Naive thymus-derived CD4-positive, alpha-beta T cell (primary cell): ENCODE measurements at regions of chr20 and their contacts with region 1.

Region 1: DNA sequence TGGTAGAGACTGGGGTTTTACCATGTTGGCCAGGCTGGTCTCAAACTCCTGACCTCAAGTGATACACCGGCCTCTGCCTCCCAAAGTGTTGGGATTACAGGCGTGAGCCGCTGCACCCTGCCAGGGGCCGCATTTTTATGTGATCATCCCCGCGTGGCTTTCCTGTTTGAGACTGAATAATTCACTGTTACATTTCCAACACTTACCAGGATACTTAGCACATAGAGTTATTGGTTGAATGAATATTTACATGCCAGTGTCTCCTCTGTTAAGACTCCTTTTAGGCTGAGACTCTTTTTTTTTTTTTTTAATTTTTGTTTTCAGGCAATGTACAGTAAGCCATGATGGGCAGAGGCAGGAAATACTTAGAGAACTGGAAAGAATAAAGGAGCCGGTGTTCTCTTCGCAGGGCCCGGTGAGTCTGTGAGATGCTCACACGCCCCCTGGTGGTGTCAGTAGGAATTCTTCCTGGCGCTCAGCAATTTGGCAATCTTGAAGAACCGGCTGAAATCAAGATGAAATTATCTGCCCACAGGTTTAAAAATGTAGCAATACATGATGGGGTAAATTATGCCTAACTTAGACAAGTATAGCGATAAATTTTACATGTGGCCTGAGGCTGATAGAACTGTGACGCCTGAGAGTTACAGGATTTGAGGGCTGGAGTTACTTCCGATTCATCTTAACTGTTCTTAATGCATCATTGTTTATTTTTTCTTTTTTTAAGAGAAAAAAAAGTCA is 7.6 kb upstream of the RNF114 start:
- DNase-seq: peak; percentile 60 to 84 (median 79)
- ATAC-seq: peak; percentile 99
- H3K4me3 ChIP-seq: no peak overlapping the region
- H3K4me3 Mint-ChIP-seq: peak overlapping the region in 6 of 10 donors; percentile 30 to 66 (median 54)
- H3K27ac ChIP-seq: peak overlapping the region; percentile 1
- H3K27ac Mint-ChIP-seq: peak overlapping the region in 7 of 9 donors; percentile 23 to 93 (median 80)
- H3K4me1 ChIP-seq: peaks cover 0 to 8% of the 10 kb centered on the region in 2 donors
- H3K4me1 Mint-ChIP-seq: peaks cover 3 to 13% (median 7%) of the 10 kb centered on the region in 7 donors
- H3K27me3 ChIP-seq: no peaks in the 10 kb centered on the region
- H3K27me3 Mint-ChIP-seq: peaks cover 0 to 2% (median 0%) of the 10 kb centered on the region in 5 donors

Region 2: GRCh38 chr20:49338061-49338460 is 590.5 kb before region 1 on chr20:
- CTCF ChIA-PET with region 1: no interaction called
- POLR2A ChIA-PET with region 1: no interaction called
- intact Hi-C with region 1: loop called (anchors 1 kb)
- DNase-seq: no peak
- ATAC-seq: no peak
- H3K4me3 ChIP-seq: no peak overlapping the region
- H3K4me3 Mint-ChIP-seq: no peak overlapping the region
- H3K27ac ChIP-seq: no peak overlapping the region
- H3K27ac Mint-ChIP-seq: no peak overlapping the region
- H3K4me1 ChIP-seq: no peaks in the 10 kb centered on the region
- H3K4me1 Mint-ChIP-seq: peaks cover 0 to 4% (median 0%) of the 10 kb centered on the region in 7 donors
- H3K27me3 ChIP-seq: peaks cover 0 to 5% of the 10 kb centered on the region in 2 donors
- H3K27me3 Mint-ChIP-seq: peaks cover 3 to 12% (median 9%) of the 10 kb centered on the region in 5 donors

Region 3: DNA sequence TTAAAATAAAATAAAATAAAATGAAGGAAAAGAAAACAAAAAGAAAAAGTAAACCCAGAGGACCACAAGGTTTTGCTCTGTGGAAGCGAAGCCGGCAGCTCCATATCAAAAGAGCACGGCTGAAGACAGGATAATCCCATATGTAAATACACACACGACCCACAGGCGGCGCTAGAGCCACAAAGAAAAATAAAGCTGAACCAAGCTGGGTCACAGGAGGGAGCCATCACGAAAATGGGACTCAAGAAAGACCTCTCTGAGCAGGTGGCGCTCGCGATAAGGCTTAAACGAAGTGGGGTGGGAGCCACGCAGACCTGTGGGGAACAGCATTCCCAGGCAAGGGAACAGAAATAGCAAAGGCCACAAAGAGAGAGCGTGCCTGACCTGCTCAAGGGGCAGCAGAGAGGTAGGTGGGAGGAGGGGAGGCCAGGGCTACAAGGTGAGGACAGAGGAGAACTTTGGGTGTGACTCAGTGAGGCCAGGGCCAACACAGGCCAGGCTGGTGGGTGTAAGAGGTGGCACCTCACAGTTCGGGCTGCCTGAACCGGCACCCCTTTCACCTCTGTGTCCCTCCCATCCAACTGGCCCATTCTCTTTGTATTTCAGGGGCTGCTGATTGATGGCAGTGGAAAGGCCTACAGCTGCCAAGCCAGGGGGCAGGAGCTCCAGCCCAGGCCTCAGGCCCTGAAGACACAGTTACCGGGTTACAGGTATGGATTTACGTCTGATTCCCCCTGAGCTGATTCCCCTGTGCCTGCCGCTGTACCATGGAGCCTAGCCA is 386.6 kb before region 1 on chr20:
- CTCF ChIA-PET with region 1: interaction called, 3 read pairs
- POLR2A ChIA-PET with region 1: no interaction called
- intact Hi-C with region 1: loop called in 1 of 2 experiments (anchors 5 kb)
- DNase-seq: peak in 8 of 9 donors; percentile 1 to 66 (median 16)
- ATAC-seq: peak; percentile 72
- H3K4me3 ChIP-seq: no peak overlapping the region
- H3K4me3 Mint-ChIP-seq: peak overlapping the region in 1 of 10 donors; percentile 53
- H3K27ac ChIP-seq: no peak overlapping the region
- H3K27ac Mint-ChIP-seq: peak overlapping the region in 1 of 9 donors; percentile 82
- H3K4me1 ChIP-seq: no peaks in the 10 kb centered on the region
- H3K4me1 Mint-ChIP-seq: peaks cover 0 to 32% (median 0%) of the 10 kb centered on the region in 7 donors
- H3K27me3 ChIP-seq: no peaks in the 10 kb centered on the region
- H3K27me3 Mint-ChIP-seq: peaks cover 2 to 15% (median 8%) of the 10 kb centered on the region in 5 donors

Region 4: DNA sequence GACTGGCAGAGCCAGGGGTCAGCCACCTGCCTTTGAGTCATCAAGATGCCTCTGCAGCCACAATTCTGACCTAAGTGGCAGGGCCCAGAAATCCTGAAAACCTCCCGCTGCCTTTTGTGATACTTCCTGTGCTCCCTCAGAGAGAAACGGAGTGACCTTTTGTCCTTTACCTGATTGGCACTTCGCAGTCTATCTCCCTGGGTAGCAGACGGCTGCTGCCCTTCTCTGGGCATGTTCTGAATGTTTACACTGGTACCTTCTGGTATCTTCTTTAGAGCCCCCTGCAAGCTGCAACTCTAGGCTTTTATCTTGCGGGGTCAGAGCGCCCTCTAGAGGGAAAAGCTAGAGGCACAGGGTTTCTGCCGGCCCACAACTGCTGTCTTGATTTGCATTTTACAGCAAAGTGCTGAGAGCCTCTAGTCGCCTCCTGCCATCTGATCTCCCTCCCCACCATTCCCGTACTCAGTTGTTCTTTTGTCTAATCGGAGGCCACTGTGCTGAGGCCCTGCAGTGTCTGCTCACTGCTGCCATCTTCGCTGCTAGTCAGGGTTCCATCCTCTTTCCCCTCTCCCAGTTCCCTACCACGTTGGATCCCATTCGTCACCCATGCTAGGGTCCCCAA is 40.1 kb before region 1 on chr20:
- CTCF ChIA-PET with region 1: interaction called, 3 read pairs
- POLR2A ChIA-PET with region 1: no interaction called
- intact Hi-C with region 1: loop called in 1 of 2 experiments (anchors 5 kb)
- DNase-seq: peak; percentile 24 to 58 (median 39)
- ATAC-seq: peak; percentile 48
- H3K4me3 ChIP-seq: no peak overlapping the region
- H3K4me3 Mint-ChIP-seq: no peak overlapping the region
- H3K27ac ChIP-seq: no peak overlapping the region
- H3K27ac Mint-ChIP-seq: peak overlapping the region in 5 of 9 donors; percentile 5 to 38 (median 19)
- H3K4me1 ChIP-seq: no peaks in the 10 kb centered on the region
- H3K4me1 Mint-ChIP-seq: peaks cover 0 to 26% (median 5%) of the 10 kb centered on the region in 7 donors
- H3K27me3 ChIP-seq: no peaks in the 10 kb centered on the region
- H3K27me3 Mint-ChIP-seq: no peaks in the 10 kb centered on the region

Region 5: DNA sequence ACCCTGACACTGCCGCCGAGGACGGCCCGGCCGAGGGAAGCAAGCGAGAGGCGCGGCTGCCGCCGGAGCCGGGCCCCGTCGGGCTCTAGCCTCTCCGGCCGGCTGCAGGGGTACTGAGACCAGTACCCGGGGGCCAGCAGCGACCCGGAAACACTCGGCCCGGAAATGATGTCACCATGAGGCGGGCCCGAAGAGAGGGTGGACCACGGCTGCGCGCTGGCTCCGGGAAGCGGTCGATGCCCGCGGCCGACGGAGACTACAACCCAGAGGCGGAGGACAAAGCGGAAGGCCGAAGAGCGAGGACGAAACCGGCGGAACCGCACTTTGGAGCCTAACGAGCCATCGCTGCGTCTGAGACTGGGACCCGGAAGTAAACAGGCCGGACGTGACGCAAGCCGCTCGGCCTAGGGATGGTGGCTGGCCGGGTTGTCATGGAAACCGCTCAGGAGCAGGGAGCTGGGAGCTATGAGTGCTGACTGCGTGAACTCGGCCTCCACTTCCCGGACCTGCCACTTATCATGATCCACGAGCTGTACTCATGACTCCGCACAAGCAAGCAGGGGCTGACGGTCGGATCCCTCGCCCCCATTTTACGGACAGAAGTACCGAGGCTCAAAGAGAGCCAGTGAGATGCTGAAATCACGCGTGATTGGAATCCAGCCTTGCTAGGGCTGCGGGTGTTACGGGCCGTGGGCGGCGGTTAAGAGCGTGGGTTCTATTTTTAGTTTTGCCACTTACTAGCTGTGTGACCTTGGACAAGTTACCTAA is 13.0 kb before region 1 on chr20 and contains the start of gene SPATA2:
- CTCF ChIA-PET with region 1: interaction called, 6 read pairs
- POLR2A ChIA-PET with region 1: interaction called, 44 read pairs
- intact Hi-C with region 1: loop called (anchors 1 to 2 kb)
- DNase-seq: peak; percentile 87 to 99 (median 93)
- ATAC-seq: peak; percentile 88
- H3K4me3 ChIP-seq: peak within 1 kb of the TSS; percentile 93
- H3K4me3 Mint-ChIP-seq: peak within 1 kb of the TSS; percentile 96 to 99 (median 97)
- H3K27ac ChIP-seq: peak within 1 kb of the TSS; percentile 100
- H3K27ac Mint-ChIP-seq: peak within 1 kb of the TSS; percentile 97 to 100 (median 99)
- H3K4me1 ChIP-seq: peaks cover 11 to 16% of the 10 kb centered on the region in 2 donors
- H3K4me1 Mint-ChIP-seq: peaks cover 25 to 48% (median 36%) of the 10 kb centered on the region in 7 donors
- H3K27me3 ChIP-seq: no peaks in the 10 kb centered on the region
- H3K27me3 Mint-ChIP-seq: no peaks in the 10 kb centered on the region
- total RNA-seq, gene SPATA2: 9.0 to 18.4 (median 10.0) TPM

Region 6: DNA sequence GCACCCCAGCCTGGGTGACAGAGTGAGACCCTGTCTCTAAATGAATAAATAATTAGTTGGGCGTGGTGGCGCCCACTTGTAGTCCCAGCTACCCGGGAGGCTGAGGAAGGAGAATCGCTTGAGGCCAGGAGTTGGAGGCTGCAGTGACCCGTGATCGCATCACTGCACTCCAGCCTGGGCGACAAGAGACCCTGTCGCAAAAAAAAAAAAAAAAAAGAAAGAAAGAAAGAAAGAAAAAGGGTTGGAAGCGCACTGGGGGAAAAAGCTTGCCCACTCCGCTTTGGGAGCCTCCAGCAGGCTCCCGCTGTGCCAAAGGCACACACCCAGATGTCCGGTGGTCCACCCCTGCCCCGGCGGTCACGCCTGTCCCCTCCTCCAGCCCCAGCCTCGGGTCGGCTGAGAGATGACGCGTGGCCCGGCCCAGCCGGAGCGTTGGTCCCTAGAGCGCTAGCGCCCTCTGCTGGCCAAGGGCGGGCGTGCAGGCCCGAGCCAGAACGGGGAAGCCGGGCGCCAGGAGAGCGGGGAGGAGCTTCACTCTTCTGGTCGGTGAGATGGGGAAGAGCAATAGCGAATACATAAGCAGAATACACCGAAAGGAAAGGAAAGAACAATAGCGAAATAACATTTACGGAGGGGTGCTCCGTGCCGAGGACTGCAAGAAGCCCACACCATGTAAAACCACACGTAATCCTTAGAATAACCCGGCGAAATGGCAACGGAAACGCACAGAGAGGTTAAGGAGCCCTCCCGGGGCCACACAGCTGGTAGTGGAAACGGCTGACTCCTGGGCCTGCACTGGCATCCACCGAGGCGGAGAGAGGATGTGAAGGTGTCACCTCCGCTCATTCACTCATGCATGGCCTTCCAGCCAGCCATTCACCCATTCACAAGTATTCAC is 142.7 kb after region 1 on chr20:
- CTCF ChIA-PET with region 1: no interaction called
- POLR2A ChIA-PET with region 1: no interaction called
- intact Hi-C with region 1: loop called in 1 of 2 experiments (anchors 2 kb)
- DNase-seq: peak; percentile 75 to 99 (median 88)
- ATAC-seq: peak; percentile 100
- H3K4me3 ChIP-seq: peak overlapping the region; percentile 51
- H3K4me3 Mint-ChIP-seq: peak overlapping the region; percentile 59 to 87 (median 72)
- H3K27ac ChIP-seq: no peak overlapping the region
- H3K27ac Mint-ChIP-seq: peak overlapping the region in 1 of 9 donors; percentile 18
- H3K4me1 ChIP-seq: peaks cover 0 to 4% of the 10 kb centered on the region in 2 donors
- H3K4me1 Mint-ChIP-seq: peaks cover 0 to 5% (median 5%) of the 10 kb centered on the region in 7 donors
- H3K27me3 ChIP-seq: no peaks in the 10 kb centered on the region
- H3K27me3 Mint-ChIP-seq: peaks cover 0 to 5% (median 4%) of the 10 kb centered on the region in 5 donors

Region 7: GRCh38 chr20:51190778-51191170 is 1262.2 kb after region 1 on chr20:
- CTCF ChIA-PET with region 1: no interaction called
- POLR2A ChIA-PET with region 1: no interaction called
- intact Hi-C with region 1: no loop called
- DNase-seq: no peak
- ATAC-seq: no peak
- H3K4me3 ChIP-seq: no peak overlapping the region
- H3K4me3 Mint-ChIP-seq: no peak overlapping the region
- H3K27ac ChIP-seq: no peak overlapping the region
- H3K27ac Mint-ChIP-seq: no peak overlapping the region
- H3K4me1 ChIP-seq: no peaks in the 10 kb centered on the region
- H3K4me1 Mint-ChIP-seq: peaks cover 0 to 2% (median 0%) of the 10 kb centered on the region in 7 donors
- H3K27me3 ChIP-seq: no peaks in the 10 kb centered on the region
- H3K27me3 Mint-ChIP-seq: peaks cover 4 to 34% (median 10%) of the 10 kb centered on the region in 5 donors